CD4-positive, alpha-beta memory T cell (primary cell): ENCODE measurements at regions of chr15 and their contacts with region 1.

Region 1: DNA sequence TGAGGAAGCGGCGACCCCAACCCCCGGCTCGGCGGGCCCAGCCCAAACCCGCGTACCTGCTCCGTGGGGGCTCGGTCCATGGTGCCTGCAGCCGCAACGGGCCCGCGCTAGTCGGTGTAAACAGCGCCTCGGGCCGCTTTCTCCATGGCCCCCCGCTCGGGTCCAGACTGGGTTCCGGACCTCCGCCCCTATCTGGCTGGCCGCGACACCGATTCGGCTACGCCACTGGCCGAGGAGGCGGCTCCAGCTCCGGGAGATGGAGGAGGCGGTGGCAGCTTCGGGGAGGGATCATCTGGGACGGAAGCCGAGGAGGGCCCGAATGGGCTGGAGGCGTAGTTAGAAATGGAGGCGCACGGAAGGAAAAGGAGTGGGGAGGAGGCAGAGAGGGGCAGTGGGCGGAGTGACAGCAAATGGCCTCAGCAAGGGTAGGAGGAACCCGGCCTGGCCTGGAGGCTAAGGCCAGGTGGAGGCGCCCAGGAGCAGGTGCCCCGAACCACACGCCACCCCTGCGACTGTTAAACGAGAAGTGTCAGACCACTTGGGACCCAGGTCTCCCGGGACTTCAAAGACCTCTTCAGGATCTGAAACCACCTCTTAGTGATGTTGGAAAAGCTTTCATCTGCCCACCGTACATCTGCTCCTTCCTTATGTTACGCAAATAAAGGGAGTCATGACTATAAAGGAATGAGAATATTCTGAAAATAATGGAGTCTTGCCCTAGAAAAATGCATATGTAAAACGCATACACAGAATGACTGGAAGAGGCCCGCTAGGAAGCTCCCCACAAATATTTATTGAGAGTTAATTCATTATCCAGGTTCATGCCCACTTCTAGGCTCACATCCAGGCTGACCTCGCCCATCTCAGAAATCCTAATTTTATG is at the start of gene SECISBP2L:
- DNase-seq: peak; percentile 89 to 93 (median 91)
- H3K4me3 ChIP-seq: peak within 1 kb of the TSS; percentile 80 to 88
- H3K4me3 Mint-ChIP-seq: peak within 1 kb of the TSS; percentile 95 to 97 (median 96)
- H3K27ac ChIP-seq: peak within 1 kb of the TSS; percentile 62
- H3K27ac Mint-ChIP-seq: peak within 1 kb of the TSS; percentile 92 to 97 (median 92)
- H3K4me1 ChIP-seq: peaks cover 35% of the 10 kb centered on the region
- H3K4me1 Mint-ChIP-seq: peaks cover 19 to 44% (median 29%) of the 10 kb centered on the region in 4 donors
- H3K27me3 ChIP-seq: no peaks in the 10 kb centered on the region
- H3K27me3 Mint-ChIP-seq: no peaks in the 10 kb centered on the region
- total RNA-seq, gene SECISBP2L: 64.3 to 72.9 TPM

Region 2: GRCh38 chr15:48330855-48331795 is 715.3 kb before region 1 on chr15 and contains the start of gene DUT:
- CTCF ChIA-PET with region 1: no interaction called
- POLR2A ChIA-PET with region 1: no interaction called
- intact Hi-C with region 1: loop called (anchors 10 kb)
- DNase-seq: peak; percentile 83 to 87 (median 85)
- H3K4me3 ChIP-seq: peak within 1 kb of the TSS; percentile 55 to 84
- H3K4me3 Mint-ChIP-seq: peak within 1 kb of the TSS; percentile 96 to 100 (median 100)
- H3K27ac ChIP-seq: peak within 1 kb of the TSS; percentile 89
- H3K27ac Mint-ChIP-seq: peak within 1 kb of the TSS; percentile 98 to 100 (median 99)
- H3K4me1 ChIP-seq: peaks cover 21% of the 10 kb centered on the region
- H3K4me1 Mint-ChIP-seq: peaks cover 16 to 35% (median 27%) of the 10 kb centered on the region in 4 donors
- H3K27me3 ChIP-seq: no peaks in the 10 kb centered on the region
- H3K27me3 Mint-ChIP-seq: no peaks in the 10 kb centered on the region
- total RNA-seq, gene DUT: 127 to 131 TPM

Region 3: DNA sequence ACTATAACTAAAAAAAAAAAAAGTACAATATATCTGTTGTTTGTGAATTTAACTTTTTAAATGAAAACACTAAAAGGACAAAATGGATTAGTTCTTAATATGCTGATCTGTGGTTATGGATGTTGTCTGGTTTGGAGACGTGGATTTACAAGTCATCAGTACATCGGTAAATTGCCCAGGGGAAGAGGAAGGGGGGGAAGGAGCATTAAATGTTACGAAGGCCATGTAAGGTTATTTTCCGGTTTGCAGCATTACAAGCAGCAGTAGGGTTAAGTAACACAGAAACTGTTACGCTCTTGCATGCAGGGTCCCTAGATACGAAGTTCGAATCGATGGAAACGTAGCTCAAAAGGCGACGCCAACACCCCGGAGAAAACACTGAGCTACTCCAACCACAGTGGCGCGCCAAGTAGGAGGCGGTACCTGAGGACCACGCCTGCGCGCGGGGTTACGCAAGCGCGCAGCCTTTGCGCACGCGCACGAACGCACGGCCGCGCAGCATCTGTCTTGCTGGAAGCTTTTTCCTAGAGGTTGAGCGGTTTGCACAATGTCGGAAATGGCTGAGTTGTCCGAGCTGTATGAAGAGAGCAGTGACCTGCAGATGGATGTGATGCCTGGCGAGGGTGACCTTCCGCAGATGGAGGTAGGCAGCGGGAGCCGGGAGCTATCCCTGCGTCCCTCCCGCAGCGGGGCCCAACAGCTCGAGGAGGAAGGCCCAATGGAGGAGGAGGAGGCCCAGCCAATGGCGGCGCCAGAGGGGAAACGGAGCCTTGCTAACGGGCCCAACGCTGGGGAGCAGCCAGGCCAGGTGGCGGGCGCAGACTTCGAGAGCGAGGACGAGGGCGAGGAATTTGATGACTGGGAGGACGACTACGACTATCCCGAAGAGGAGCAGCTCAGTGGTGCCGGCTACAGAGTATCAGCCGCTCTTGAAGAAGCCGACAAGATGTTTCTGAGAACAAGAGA is 168.5 kb before region 1 on chr15 and contains the start of gene EID1:
- CTCF ChIA-PET with region 1: interaction called, 8 read pairs
- POLR2A ChIA-PET with region 1: interaction called, 21 read pairs
- intact Hi-C with region 1: loop called (anchors 2 kb)
- DNase-seq: peak; percentile 93 to 95 (median 94)
- H3K4me3 ChIP-seq: peak within 1 kb of the TSS; percentile 74 to 96
- H3K4me3 Mint-ChIP-seq: peak within 1 kb of the TSS; percentile 96 to 100 (median 98)
- H3K27ac ChIP-seq: peak within 1 kb of the TSS; percentile 71
- H3K27ac Mint-ChIP-seq: peak within 1 kb of the TSS; percentile 97 to 100 (median 99)
- H3K4me1 ChIP-seq: peaks cover 26% of the 10 kb centered on the region
- H3K4me1 Mint-ChIP-seq: peaks cover 18 to 31% (median 24%) of the 10 kb centered on the region in 4 donors
- H3K27me3 ChIP-seq: no peaks in the 10 kb centered on the region
- H3K27me3 Mint-ChIP-seq: peaks cover 3 to 4% of the 10 kb centered on the region in 2 donors
- total RNA-seq, gene EID1: 76.0 to 91.2 TPM

Region 4: GRCh38 chr15:49145651-49146609 is 99.5 kb after region 1 on chr15:
- CTCF ChIA-PET with region 1: interaction called, 6 read pairs
- POLR2A ChIA-PET with region 1: no interaction called
- intact Hi-C with region 1: loop called (anchors 2 kb)
- DNase-seq: peak in 4 of 5 donors; percentile 17 to 32 (median 24)
- H3K4me3 ChIP-seq: no peak overlapping the region
- H3K4me3 Mint-ChIP-seq: peak overlapping the region in 2 of 8 donors; percentile 9 to 24
- H3K27ac ChIP-seq: no peak overlapping the region
- H3K27ac Mint-ChIP-seq: peak overlapping the region in 3 of 7 donors; percentile 1 to 6 (median 4)
- H3K4me1 ChIP-seq: peaks cover 45% of the 10 kb centered on the region
- H3K4me1 Mint-ChIP-seq: peaks cover 35 to 53% (median 44%) of the 10 kb centered on the region in 4 donors
- H3K27me3 ChIP-seq: no peaks in the 10 kb centered on the region
- H3K27me3 Mint-ChIP-seq: no peaks in the 10 kb centered on the region

Region 5: GRCh38 chr15:49169880-49170597 is 123.6 kb after region 1 on chr15 and contains the start of gene GALK2:
- CTCF ChIA-PET with region 1: interaction called, 4 read pairs
- POLR2A ChIA-PET with region 1: interaction called, 10 read pairs
- intact Hi-C with region 1: no loop called
- DNase-seq: peak; percentile 83 to 97 (median 85)
- H3K4me3 ChIP-seq: peak within 1 kb of the TSS; percentile 57 to 86
- H3K4me3 Mint-ChIP-seq: peak within 1 kb of the TSS; percentile 94 to 99 (median 98)
- H3K27ac ChIP-seq: peak within 1 kb of the TSS; percentile 80
- H3K27ac Mint-ChIP-seq: peak within 1 kb of the TSS; percentile 90 to 100 (median 98)
- H3K4me1 ChIP-seq: peaks cover 34% of the 10 kb centered on the region
- H3K4me1 Mint-ChIP-seq: peaks cover 26 to 50% (median 38%) of the 10 kb centered on the region in 4 donors
- H3K27me3 ChIP-seq: no peaks in the 10 kb centered on the region
- H3K27me3 Mint-ChIP-seq: no peaks in the 10 kb centered on the region
- total RNA-seq, gene GALK2: 30.7 to 31.5 TPM

Region 6: DNA sequence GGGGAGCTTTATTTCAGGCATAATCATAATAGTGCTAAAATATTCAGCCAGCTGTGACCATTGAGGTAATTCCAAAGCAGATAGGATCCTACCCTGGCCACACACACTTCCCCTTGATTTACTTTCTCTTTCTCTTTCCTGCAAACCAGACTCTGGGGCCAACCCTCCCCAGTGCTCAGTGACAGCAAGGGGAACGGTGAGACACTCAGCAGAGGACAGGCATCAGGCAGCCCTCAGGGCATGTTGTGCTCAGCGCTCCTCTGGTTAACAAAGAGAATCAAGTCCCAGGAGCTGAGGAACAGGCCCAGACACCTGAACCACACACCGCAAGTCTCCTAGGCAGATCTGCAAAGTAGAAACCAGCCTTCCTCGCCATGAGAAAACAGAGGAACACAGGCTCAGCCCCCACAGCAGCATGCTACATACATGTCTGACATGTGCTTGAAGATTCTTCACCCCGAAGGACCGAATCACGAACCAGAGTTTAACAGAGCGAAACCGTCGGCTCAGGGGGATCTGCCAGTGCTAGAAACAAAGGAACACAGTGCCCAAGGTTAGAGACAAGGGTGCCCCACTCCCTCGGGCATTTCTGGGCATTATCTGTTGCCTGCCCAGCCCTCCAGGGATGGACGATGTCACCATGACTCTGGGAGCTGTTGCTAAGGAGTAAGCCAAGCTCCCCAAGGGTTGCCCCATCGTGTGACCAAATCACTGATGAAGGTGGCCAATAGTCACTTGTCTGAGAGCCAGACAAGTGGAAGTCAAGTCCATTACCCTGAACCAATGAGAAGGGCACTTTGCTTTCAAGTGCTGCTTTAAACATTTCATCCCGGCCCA is 1201.6 kb after region 1 on chr15:
- CTCF ChIA-PET with region 1: no interaction called
- POLR2A ChIA-PET with region 1: no interaction called
- intact Hi-C with region 1: loop called (anchors 5 kb)
- DNase-seq: peak; percentile 51 to 64 (median 60)
- H3K4me3 ChIP-seq: peak overlapping the region in 1 of 2 donors; percentile 15
- H3K4me3 Mint-ChIP-seq: peak overlapping the region; percentile 79 to 91 (median 85)
- H3K27ac ChIP-seq: peak overlapping the region; percentile 45
- H3K27ac Mint-ChIP-seq: peak overlapping the region; percentile 91 to 98 (median 96)
- H3K4me1 ChIP-seq: peaks cover 20% of the 10 kb centered on the region
- H3K4me1 Mint-ChIP-seq: peaks cover 21 to 30% (median 25%) of the 10 kb centered on the region in 4 donors
- H3K27me3 ChIP-seq: no peaks in the 10 kb centered on the region
- H3K27me3 Mint-ChIP-seq: no peaks in the 10 kb centered on the region